Activated T-helper 1 cell treated with anti-CD3 and anti-CD28 coated beads, Interleukin-12 subunit alpha, Interleukin-12 subunit beta, Interleukin-2, Interleukin-4 antibody, amounts not matched to agents 30 ng/mL and 10 ng/mL and 1 ng/mL, durations not matched to agents 14 hours and 24 hours and 36 hours (primary cell): ENCODE measurements at regions of chr3 and their contacts with region 1.

Region 1: DNA sequence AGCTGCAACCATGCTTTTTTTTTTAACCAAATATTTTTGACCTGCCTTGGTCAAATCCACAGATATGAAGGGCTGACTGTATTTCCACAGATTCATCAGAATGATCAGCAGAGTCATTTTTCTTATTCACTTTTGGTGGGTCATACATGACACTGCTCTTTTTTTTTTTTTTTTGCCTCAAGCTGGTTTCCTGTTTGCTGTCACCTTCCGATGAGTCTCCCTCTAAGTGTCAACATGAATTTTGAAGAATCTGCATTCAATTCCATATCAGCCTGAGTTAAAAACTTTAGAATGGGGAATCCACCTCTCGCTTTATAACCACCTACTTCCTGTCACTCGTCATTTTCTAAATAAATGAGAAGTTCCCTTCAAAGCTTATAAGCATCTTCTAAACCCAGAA is 2.2 kb upstream of the SLC12A8 start:
- DNase-seq: no peak
- H3K4me3 Mint-ChIP-seq: no peak overlapping the region
- H3K27ac Mint-ChIP-seq: peak overlapping the region; percentile 1
- H3K4me1 Mint-ChIP-seq: peaks cover 19% of the 10 kb centered on the region
- H3K27me3 Mint-ChIP-seq: peaks cover 46% of the 10 kb centered on the region

Region 2: DNA sequence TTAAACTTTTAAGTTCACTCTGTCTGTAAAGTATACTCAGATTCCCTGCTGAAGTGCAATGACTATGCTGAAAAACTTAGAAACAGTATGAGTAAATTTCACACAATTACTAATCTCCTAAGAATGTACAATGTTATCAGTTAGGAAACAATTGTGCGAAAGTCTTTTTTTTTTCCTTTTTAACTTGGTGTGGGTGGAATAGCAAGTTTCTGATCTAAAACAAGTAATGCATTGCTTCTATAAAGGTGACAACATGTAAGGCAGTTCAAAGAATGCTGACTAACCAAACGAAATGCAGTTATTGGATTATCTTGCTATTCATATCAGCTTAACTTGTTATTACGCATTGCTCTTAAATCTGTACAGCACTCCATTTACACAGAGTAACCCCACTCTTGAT is 17.2 kb after region 1 on chr3:
- intact Hi-C with region 1: loop called (anchors 1 kb)
- DNase-seq: no peak
- H3K4me3 Mint-ChIP-seq: no peak overlapping the region
- H3K27ac Mint-ChIP-seq: peak overlapping the region; percentile 58
- H3K4me1 Mint-ChIP-seq: peaks cover 23% of the 10 kb centered on the region
- H3K27me3 Mint-ChIP-seq: no peaks in the 10 kb centered on the region